ENCODE measurements at regions of chr16 and their contacts with region 1.

Region 1: GRCh38 chr16:66660422-66661209 is 35.9 kb downstream of the CMTM4 start:
- DNase-seq: peak; percentile 41
- H3K4me3 ChIP-seq: peak overlapping the region; percentile 5; the same call in 1 of the 2 replicates
- H3K27ac ChIP-seq: peak overlapping the region; percentile 79
- H3K27me3 ChIP-seq: no peaks in the 10 kb centered on the region
- CTCF ChIP-seq: peak; percentile 49

Region 2: DNA sequence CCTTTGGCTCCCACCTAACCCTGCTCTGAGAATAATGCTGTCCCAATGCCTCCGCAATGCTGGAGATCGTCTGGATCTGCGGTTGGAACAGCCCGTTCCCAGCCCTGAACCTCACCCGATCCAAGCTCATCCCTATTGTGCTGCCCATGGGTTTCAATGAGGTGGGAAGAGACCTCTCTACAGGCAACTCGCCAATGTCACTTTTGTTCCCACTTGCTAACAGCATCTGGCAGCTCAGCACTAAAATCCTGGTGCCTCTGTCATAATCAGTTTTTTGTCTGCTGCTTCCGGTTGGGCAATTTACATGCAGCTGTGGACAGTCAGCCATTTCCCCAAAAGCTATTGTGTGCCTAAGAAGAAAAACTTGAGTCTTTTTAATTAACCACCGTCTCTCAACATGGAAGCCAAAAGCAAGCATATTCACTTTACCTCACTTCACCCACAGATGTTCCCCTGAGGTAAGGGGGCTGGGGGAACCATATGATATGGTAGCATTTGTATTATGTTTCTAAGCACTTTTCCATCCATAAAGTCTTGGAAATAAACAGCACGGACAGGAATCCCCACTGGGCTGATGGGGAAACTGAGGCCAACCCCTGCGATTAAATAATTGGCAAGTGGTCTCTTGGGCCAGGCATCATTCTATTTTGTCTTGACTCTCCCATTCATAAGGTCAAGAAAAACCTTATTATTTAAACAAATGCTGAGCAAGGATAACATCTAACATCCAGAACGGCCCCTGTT is 453.3 kb before region 1 on chr16:
- CTCF ChIA-PET with region 1: no interaction called
- POLR2A ChIA-PET with region 1: no interaction called
- DNase-seq: no peak
- H3K4me3 ChIP-seq: no peak overlapping the region
- H3K27ac ChIP-seq: no peak overlapping the region
- H3K27me3 ChIP-seq: no peaks in the 10 kb centered on the region
- CTCF ChIP-seq: no peak

Region 3: GRCh38 chr16:66295761-66296520 is 364.7 kb before region 1 on chr16:
- CTCF ChIA-PET with region 1: no interaction called
- POLR2A ChIA-PET with region 1: no interaction called
- DNase-seq: no peak
- H3K4me3 ChIP-seq: no peak overlapping the region
- H3K27ac ChIP-seq: no peak overlapping the region
- H3K27me3 ChIP-seq: peaks cover 39% of the 10 kb centered on the region
- CTCF ChIP-seq: no peak

Region 4: DNA sequence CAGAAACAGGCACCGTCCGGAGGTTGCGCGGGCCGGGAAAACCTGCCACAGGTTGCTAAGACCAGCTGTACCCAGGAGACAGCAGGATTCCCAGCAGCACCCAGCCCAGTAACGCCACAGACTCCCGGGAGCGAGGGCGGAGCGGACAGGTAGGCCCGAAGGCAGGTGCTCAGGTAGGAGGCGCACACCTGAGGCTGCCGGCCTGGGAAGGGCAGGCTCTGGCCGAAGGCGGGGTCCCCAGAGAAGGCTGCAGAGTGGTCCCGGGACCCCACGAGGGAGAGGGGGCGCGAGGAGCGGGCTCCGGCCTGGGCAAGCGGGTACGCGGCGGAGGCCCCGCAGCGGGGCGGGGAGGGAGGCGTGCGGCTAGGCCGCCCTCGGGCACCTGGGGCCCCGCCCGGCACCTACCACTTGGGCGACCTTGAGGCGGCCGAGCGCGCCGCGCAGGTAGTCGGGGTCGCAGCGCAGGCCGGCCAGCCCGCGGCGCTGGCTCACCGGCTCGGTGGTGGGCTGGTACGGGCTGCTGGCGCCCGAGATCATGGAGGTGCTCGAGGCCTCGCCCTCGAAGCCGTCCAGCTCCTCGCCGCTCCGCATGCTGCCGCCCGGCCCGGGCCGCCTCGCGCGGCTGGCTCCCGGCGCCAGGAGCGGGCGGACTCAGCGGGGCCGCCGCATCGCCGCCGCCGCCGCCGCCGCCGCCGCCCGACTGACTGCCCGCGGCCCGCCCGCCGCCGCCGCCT is 35.5 kb after region 1 on chr16:
- CTCF ChIA-PET with region 1: interaction called, 6 read pairs
- POLR2A ChIA-PET with region 1: interaction called, 10 read pairs
- DNase-seq: no peak
- H3K4me3 ChIP-seq: peak overlapping the region; percentile 70
- H3K27ac ChIP-seq: no peak overlapping the region
- H3K27me3 ChIP-seq: peaks cover 5% of the 10 kb centered on the region
- CTCF ChIP-seq: no peak

Region 5: GRCh38 chr16:66728117-66728787 is 67.6 kb after region 1 on chr16:
- CTCF ChIA-PET with region 1: interaction called, 21 read pairs
- POLR2A ChIA-PET with region 1: no interaction called
- DNase-seq: no peak
- H3K4me3 ChIP-seq: no peak overlapping the region
- H3K27ac ChIP-seq: no peak overlapping the region
- H3K27me3 ChIP-seq: no peaks in the 10 kb centered on the region
- CTCF ChIP-seq: peak; percentile 66

Region 6: DNA sequence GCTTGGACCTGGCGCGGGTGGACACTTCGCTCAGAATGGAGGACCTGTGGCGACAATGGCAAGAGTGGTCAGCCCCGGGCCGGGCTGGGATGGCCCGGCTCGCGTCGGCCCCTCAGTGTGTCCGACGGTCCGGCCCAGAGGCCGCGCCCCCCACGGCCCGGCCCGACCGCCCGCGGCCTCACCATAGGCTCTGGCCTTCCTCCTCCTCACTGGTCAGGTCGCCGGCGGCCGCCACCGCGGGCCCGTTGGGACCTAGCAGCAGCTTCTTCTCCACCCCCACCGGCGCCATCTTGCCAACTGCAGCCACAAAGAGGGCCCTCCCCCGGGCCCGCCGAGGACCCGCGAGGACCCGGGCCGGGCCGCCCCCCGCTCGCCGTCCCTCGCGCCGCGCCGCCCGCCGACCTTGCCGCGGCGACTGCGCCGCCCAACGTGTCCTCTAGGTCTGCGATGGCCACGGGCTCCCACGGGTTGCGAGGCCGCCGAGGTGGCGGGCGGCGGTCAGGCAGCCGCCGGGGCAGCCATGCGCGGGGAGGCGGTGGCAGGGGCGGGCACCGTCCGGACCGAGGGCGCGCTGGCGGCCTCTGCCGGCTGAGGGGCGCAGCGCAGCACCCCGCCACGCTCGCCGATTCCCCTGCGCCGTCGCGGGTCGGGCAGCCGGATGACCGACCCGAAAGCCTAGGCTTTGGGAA is 90.8 kb after region 1 on chr16 and contains the start of gene DYNC1LI2:
- CTCF ChIA-PET with region 1: interaction called, 20 read pairs
- POLR2A ChIA-PET with region 1: interaction called, 3 read pairs
- DNase-seq: peak; percentile 20
- H3K4me3 ChIP-seq: peak within 1 kb of the TSS; percentile 97
- H3K27ac ChIP-seq: peak within 1 kb of the TSS; percentile 31
- H3K27me3 ChIP-seq: peaks cover 6% of the 10 kb centered on the region
- CTCF ChIP-seq: peak; percentile 58
- polyA plus RNA-seq, gene DYNC1LI2: 86.7 and 88.5 TPM in 2 replicates